Testis (tissue), 5 donors: ENCODE measurements at regions of chr11 and their contacts with region 1.

Region 1: DNA sequence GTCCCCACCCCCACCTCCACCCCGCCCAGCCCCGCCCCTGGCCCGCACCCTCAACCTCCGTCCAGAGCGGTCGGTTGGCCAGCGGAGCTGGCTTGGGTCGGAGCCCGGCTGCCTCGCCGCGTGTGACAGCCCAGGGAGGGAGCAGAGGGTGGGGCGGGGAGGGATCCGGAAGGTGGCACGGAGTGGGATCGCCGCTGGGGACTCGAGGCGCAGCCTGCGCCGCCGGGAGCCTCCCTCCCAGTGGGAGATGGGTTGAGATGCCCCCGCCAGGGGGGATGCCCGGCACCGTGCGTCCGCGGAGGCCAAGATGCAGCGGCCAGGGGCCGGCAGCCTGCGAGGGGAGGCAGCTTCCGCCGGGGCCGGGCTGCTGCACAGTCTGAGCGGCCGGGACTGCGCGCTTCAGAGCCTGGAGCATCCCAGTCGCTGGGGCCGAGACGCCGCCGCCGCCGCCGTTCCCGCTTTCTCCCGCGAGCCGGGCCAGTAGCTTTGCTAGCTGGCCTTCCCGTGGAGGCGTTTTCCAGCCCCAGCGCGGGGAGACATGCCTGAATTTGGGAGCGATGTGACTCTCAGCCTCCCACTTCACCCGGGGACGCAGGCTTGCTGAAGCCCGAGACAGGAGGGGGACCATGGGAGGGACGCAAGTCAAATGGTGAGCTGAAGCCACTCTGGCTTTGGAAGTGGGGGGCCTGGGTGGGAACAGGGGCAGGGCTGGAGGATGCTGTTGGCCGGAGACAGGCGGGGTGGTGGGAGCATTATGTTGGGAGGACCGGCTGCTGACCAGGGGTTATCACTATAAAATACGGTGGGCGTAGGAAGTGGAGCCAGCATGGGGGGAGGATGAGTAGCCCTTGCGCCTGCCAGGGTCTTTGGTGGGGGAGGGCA is 40.2 kb downstream of the DIXDC1 start:
- DNase-seq: peak; percentile 56
- H3K4me3 ChIP-seq: peak overlapping the region; percentile 63 to 67
- H3K27ac ChIP-seq: peak overlapping the region; percentile 76 to 88
- H3K4me1 ChIP-seq: no peaks in the 10 kb centered on the region
- H3K27me3 ChIP-seq: no peaks in the 10 kb centered on the region
- CTCF ChIP-seq: no peak
- POLR2A ChIP-seq: no peak

Region 2: DNA sequence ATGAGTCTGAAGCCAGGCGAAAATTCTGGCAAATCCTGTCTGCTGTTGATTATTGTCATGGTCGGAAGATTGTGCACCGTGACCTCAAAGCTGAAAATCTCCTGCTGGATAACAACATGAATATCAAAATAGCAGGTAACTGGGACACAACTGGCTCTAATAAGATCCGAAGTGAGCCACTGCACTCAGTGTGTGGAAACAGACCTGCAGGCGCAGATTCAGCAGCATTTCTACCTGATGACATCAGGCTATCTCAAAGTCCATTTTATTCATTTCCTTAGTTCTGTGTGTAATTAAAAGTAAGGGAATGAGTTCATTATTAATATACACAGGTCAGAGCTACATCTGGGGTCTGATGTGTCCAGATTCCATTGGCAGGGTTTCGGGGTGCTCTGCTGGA is 289.4 kb before region 1 on chr11:
- intact Hi-C with region 1: no loop called
- DNase-seq: no peak
- H3K4me3 ChIP-seq: no peak overlapping the region
- H3K27ac ChIP-seq: no peak overlapping the region
- H3K4me1 ChIP-seq: no peaks in the 10 kb centered on the region
- H3K27me3 ChIP-seq: no peaks in the 10 kb centered on the region
- CTCF ChIP-seq: no peak
- POLR2A ChIP-seq: no peak

Region 3: GRCh38 chr11:111938687-111939160 is 38.7 kb before region 1 on chr11:
- intact Hi-C with region 1: loop called (anchors 5 kb)
- DNase-seq: no peak
- H3K4me3 ChIP-seq: no peak overlapping the region
- H3K27ac ChIP-seq: no peak overlapping the region
- H3K4me1 ChIP-seq: peaks cover 13% of the 10 kb centered on the region
- H3K27me3 ChIP-seq: no peaks in the 10 kb centered on the region
- CTCF ChIP-seq: no peak
- POLR2A ChIP-seq: no peak